Tibial artery (tissue), 4 donors: ENCODE measurements at regions of chr9 and their contacts with region 1.

Region 1: GRCh38 chr9:136283291-136284235 is 20.3 kb downstream of the CCDC187 start:
- DNase-seq: peak; percentile 74 to 87
- H3K4me3 ChIP-seq: peak overlapping the region; percentile 47 to 54
- H3K27ac ChIP-seq: peak overlapping the region; percentile 34 to 71
- H3K4me1 ChIP-seq: peaks cover 0 to 12% (median 8%) of the 10 kb centered on the region in 4 donors
- H3K27me3 ChIP-seq: peaks cover 0 to 75% of the 10 kb centered on the region in 2 donors
- CTCF ChIP-seq: peak; percentile 83 to 86

Region 2: DNA sequence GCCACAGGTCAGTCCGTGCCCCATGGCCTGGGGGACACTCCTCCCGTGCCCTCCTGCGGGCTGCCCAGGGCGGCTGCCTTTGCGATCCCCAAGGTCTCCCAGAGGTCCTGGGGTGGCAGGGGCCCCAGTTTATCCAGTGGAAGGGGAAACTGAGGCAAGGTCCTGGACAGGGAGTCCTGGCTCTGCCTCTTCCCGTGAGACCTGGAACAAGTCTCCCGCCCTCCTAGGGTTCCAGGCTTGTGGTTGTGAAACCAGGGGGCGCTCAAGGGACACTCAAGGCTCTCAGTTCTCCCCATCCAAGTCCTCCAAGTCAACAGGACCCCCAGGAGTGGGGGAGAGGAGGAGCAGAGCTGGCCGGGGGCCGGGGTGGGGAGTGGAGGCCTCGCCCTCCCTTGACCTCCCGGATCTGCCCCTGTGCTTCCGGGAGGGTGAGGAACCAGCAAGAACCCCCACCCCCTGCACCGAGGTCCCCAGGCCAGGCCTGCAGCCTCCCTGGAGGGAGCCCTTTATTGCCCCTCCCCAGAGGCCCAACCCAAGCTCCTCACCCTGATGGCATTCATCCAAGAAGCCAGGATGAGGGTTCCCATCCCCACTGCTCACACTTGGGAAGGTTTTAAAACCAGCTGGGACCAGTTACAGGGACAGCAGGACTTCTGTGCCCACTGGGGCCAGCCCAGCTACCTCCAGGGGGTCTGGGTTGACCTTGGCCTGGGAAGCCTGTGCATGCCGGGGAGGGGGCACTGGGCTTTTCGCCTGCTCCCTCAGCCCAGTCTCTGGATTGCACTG is 140.2 kb before region 1 on chr9:
- intact Hi-C with region 1: loop called (anchors 10 kb)
- DNase-seq: no peak
- H3K4me3 ChIP-seq: no peak overlapping the region
- H3K27ac ChIP-seq: no peak overlapping the region
- H3K4me1 ChIP-seq: no peaks in the 10 kb centered on the region
- H3K27me3 ChIP-seq: peaks cover 0 to 77% of the 10 kb centered on the region in 2 donors
- CTCF ChIP-seq: no peak

Region 3: DNA sequence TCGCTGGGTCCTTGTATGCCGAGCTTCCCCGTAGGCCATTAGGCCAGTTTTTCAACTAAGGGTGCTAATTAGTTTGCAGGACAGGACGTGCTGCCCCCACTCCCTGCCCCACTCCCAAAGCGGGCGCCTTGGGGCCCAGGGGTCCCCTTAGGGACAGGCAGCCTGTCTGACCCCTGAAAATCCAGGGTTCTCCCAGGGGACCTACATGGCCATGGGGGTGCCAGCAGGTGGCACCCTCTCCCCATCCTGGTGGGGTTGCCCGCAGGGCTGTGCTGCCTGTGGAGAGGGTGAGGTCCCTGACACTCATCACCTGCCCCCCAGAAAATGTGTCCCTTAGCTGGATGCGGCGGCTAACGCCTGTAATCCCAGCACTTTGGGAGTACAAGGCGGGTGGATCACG is 28.9 kb after region 1 on chr9:
- intact Hi-C with region 1: no loop called
- DNase-seq: no peak
- H3K4me3 ChIP-seq: no peak overlapping the region
- H3K27ac ChIP-seq: no peak overlapping the region
- H3K4me1 ChIP-seq: no peaks in the 10 kb centered on the region
- H3K27me3 ChIP-seq: peaks cover 0 to 49% of the 10 kb centered on the region in 2 donors
- CTCF ChIP-seq: peak; percentile 35 to 44